Kidney (tissue), 22 donors: ENCODE measurements at regions of chr18 and their contacts with region 1.

Region 1: DNA sequence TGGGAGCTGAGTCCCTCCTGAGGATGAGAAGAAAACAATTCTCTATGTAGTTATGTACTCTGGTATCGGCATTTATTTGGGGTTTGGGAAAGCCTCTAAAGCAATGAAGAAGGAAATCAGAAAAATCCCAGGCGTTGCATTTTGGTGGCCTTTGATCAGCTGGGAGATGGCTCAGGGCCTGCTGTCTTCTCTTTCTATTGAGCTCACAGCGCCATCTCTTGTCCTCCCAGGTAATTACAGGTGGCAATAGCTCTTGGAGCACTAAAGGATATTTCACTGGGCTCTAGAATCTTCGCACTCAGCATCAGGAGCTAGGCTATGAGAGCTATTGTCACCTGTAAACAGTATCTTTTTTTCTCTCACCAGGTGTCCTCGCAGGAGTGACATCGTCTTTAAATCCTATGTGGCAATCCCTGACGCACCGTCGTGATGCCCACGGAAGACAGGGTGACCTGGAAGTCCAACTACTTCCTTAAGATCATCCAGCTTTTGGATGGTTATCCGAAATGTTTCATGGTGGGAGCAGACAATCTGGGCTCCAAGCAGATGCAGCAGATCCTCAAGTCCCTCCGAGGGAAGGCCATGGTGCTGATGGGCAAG is 76.1 kb upstream of the PMAIP1 start:
- DNase-seq: peak in 4 of 5 donors; percentile 76 to 93 (median 86)
- H3K4me3 ChIP-seq: no peak overlapping the region
- H3K27ac ChIP-seq: no peak overlapping the region
- H3K4me1 ChIP-seq: no peaks in the 10 kb centered on the region
- H3K27me3 ChIP-seq: no peaks in the 10 kb centered on the region
- CTCF ChIP-seq: peak; percentile 88

Region 2: DNA sequence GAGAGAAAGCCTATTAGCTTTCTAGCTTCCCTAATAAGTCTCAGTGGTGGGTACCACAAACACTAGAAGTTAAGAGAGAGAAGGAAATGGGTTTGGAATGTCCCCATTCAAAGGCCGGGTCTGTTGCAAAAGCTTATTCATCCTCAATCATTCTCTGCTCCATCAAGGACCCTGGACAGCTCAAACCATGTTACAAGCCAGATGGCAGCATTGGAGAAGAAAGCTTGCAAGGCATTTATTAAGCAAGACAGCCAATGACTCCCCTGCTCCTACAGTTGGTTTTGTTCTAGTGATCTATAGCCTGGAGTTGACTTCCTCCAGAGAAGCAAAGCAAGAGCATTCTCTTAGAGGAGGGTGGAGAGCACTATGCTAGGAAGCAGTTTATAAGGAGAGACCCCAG is 377.7 kb before region 1 on chr18:
- intact Hi-C with region 1: loop called (anchors 10 kb)
- DNase-seq: peak in 3 of 5 donors; percentile 24 to 65 (median 58)
- H3K4me3 ChIP-seq: no peak overlapping the region
- H3K27ac ChIP-seq: no peak overlapping the region
- H3K4me1 ChIP-seq: no peaks in the 10 kb centered on the region
- H3K27me3 ChIP-seq: no peaks in the 10 kb centered on the region
- CTCF ChIP-seq: no peak